ENCODE measurements at regions of chr18 and their contacts with region 1.

Region 1: DNA sequence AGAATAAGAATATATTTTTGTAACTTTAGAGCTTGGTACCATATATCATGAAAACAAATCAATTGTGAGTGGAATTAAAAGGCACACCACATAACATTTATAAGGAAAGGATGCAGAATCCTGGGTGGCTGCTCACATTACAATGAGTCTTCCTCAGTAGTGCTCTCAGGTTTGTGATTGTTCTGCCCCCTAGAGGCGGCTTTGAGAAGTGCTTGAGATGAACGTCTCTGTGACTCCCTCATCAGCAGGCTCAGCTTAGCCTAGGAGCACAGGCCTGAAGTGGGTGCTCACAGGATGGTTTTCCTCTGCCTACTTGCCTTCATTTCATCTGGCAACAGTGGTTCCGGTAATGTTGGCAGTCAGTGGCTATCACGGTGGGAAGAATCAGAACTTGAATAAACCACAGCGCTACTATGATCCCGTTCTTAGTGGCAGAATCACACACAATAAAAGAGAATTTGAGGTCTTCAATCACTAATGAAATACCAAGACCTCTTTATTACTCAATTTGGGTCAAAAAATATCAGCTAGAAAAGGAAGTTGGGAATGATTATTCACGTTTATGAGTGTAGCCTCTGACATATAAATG is 38.1 kb upstream of the B4GALT6 start:
- DNase-seq: peak; percentile 73 to 83
- ATAC-seq: peak; percentile 87 to 100 (median 98)
- H3K4me3 ChIP-seq: no peak overlapping the region
- H3K4me3 Mint-ChIP-seq: no peak overlapping the region
- H3K27ac ChIP-seq: no peak overlapping the region
- H3K27ac Mint-ChIP-seq: no peak overlapping the region
- H3K4me1 ChIP-seq: peaks cover 8% of the 10 kb centered on the region
- H3K4me1 Mint-ChIP-seq: peaks cover 4 to 7% of the 10 kb centered on the region in 2 donors
- H3K27me3 ChIP-seq: peaks cover 8% of the 10 kb centered on the region
- H3K27me3 Mint-ChIP-seq: peaks cover 17% of the 10 kb centered on the region in 2 donors
- CTCF ChIP-seq: peak; percentile 94

Region 2: DNA sequence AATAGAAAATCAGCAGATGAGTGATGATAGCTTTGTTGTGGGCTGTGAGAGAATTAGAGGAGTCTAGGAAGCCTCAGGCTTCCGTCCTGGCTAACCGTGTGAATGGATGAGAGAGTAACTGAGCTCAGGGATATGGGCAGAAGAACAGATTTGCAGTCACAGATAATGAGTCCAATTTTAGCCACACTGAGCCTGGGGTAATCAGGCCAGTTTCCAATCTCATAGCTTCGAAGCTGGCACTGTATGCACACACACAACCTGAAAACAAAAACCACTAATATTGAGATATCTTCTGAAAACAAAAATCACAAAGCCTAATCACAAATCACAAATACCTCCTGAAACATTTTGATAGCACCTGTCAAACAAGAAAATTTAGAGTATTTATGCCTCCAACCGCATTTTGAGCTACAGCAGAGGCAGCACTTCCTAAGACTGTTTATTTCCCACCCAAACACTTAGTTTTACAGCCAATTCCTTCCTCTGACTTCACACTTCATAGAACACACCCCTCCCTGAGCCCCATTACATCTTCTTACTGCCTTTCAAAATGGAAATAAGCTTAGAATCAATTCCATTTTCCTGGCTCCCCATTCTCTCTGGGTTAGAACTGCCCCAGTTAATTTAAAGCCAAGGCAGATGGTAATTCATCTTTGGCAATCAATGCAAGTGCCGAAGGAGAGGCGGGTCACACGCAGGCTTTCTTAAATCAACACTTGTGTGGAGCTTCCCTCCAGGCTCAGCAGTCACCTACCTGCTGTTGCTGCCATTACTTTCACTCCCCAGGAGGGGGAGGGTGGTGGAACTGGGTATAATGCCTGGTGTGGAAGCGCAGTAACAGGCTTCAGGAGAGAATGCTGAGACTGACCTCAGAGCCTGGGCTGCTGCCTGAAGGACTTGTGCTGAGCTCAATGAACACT is 111.9 kb before region 1 on chr18:
- intact Hi-C with region 1: loop called (anchors 2 kb)
- DNase-seq: peak in 1 of 2 donors; percentile 22
- ATAC-seq: peak; percentile 40 to 72 (median 57)
- H3K4me3 ChIP-seq: no peak overlapping the region
- H3K4me3 Mint-ChIP-seq: no peak overlapping the region
- H3K27ac ChIP-seq: no peak overlapping the region
- H3K27ac Mint-ChIP-seq: peak overlapping the region in 1 of 2 donors; percentile 3
- H3K4me1 ChIP-seq: no peaks in the 10 kb centered on the region
- H3K4me1 Mint-ChIP-seq: peaks cover 8 to 13% of the 10 kb centered on the region in 2 donors
- H3K27me3 ChIP-seq: no peaks in the 10 kb centered on the region
- H3K27me3 Mint-ChIP-seq: peaks cover 0 to 7% of the 10 kb centered on the region in 2 donors
- CTCF ChIP-seq: peak; percentile 18

Region 3: DNA sequence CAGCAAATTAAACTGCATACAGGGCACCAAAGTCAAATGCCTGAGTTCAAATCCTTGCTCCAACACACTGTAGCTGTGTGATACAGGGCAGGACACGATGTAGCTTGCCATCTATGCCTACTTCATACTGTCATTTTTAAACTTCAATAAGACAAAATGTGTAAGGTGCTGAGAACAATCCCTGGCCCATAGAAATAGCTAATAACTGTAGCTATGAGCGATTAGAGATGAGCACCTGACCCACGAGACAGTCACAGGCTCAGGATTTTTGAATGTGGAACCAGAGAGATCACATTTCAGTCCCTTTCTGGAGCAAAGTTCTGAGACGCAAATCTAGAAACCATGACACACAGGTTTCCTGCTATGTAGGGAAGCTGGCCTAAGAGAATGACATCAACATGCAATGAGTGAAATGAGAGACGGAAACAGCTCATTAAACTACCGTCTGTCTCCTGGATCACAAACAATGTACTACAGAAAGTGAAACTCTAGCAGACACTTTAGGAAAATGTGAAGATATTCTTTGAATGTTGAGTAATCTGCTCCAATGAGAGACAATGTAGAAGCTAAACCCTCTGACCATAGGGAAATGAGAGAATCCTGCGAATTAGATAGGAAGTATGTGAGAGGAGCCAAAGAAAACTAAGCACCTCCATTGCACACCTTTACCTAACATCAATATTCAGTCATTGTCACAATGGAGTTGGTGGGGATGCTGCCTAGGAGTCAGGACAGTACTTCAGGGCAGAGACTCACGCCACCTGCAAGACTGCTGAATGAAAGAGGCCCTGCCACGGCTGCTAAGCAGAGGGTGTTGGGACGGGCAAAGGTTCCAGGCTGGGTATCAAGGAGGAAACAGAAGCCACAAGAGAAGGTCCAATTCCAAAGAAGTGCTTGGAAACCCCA is 63.5 kb before region 1 on chr18:
- intact Hi-C with region 1: no loop called
- DNase-seq: peak in 1 of 2 donors; percentile 51
- ATAC-seq: peak; percentile 69 to 83 (median 82)
- H3K4me3 ChIP-seq: no peak overlapping the region
- H3K4me3 Mint-ChIP-seq: peak overlapping the region; percentile 49
- H3K27ac ChIP-seq: peak overlapping the region; percentile 53
- H3K27ac Mint-ChIP-seq: peak overlapping the region; percentile 80 to 89
- H3K4me1 ChIP-seq: peaks cover 14% of the 10 kb centered on the region
- H3K4me1 Mint-ChIP-seq: peaks cover 10 to 13% of the 10 kb centered on the region in 2 donors
- H3K27me3 ChIP-seq: no peaks in the 10 kb centered on the region
- H3K27me3 Mint-ChIP-seq: no peaks in the 10 kb centered on the region
- CTCF ChIP-seq: no peak

Region 4: DNA sequence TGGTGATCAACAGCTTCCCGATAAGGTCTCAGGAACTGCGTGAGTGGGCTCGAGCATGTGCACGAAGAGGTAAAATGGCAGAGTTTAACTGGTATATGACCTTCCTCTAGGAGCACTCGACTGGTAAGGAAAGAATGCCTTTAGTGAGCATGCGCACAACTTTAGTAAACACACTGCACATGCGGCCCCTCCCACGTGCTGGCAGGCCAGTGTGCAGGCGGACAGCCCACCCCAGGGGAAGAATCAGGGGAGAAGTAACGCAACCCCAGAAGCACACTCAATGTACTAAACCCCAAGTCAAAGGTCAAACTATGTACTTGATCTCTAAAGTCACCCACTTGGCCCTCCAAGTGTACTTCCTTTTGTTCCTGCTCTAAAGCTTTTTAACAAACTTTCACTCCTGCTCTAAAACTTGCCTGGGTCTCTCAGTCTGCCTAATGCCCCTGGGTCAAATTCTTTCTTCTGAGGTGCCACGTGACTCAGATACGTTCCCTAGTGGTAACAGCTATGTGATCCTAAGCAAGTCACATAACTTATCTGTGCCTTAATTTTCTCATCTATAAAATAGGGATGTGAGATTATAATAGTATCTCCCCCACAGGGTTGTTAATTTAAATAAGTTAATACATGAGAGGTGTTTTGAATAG is 67.1 kb after region 1 on chr18:
- intact Hi-C with region 1: no loop called
- DNase-seq: no peak
- ATAC-seq: no peak
- H3K4me3 ChIP-seq: no peak overlapping the region
- H3K4me3 Mint-ChIP-seq: no peak overlapping the region
- H3K27ac ChIP-seq: no peak overlapping the region
- H3K27ac Mint-ChIP-seq: no peak overlapping the region
- H3K4me1 ChIP-seq: peaks cover 11% of the 10 kb centered on the region
- H3K4me1 Mint-ChIP-seq: peaks cover 16 to 17% of the 10 kb centered on the region in 2 donors
- H3K27me3 ChIP-seq: no peaks in the 10 kb centered on the region
- H3K27me3 Mint-ChIP-seq: peaks cover 0 to 3% of the 10 kb centered on the region in 2 donors
- CTCF ChIP-seq: no peak

Region 5: DNA sequence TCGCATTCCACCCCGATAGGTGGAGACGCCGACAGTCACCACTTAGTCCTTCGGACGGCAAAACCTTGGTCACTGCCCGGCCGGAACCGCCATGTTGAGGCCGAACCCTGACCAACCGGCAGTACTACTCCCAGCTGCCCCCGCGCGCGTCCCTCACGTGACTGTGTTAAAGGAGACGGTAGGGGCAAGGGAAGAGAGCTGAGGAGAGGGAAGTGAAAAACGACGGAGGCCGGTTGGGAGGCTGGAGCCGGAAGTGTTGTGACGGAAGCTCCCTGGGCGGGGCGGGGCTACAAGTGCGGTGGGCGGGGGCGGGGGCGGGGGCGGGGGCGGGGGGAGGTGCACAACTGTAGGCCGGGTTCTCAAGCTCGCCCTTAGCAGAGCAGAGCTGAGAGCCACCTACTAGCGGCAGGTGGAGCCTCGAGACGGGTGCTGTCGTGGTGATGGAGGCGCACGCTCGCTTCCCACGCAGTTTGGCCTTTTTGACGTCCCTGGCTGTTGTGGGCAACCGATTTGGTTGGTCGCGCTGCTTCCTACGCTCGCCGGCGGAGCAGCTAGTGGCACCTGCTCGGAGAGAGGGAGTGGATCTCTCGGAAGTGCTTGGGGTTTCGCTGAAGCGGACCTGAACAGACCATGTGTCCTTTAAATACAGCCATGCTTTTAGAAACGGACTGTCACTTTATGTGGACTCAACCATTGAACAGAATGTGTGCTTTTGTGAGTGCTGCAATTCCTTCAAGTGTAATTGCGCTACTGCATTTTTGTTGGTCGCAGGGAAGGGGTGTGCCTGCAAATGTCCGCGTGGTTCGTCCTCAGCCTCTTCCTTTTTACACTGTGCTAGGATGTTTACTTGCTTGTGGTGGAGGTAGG is 220.8 kb after region 1 on chr18 and contains the start of gene TRAPPC8:
- intact Hi-C with region 1: no loop called
- DNase-seq: peak; percentile 85 to 96
- ATAC-seq: peak; percentile 82 to 93 (median 83)
- H3K4me3 ChIP-seq: peak within 1 kb of the TSS; percentile 96
- H3K4me3 Mint-ChIP-seq: peak within 1 kb of the TSS; percentile 99
- H3K27ac ChIP-seq: peak within 1 kb of the TSS; percentile 98
- H3K27ac Mint-ChIP-seq: peak within 1 kb of the TSS; percentile 95 to 99
- H3K4me1 ChIP-seq: peaks cover 13% of the 10 kb centered on the region
- H3K4me1 Mint-ChIP-seq: peaks cover 45 to 48% of the 10 kb centered on the region in 2 donors
- H3K27me3 ChIP-seq: no peaks in the 10 kb centered on the region
- H3K27me3 Mint-ChIP-seq: peaks cover 0 to 2% of the 10 kb centered on the region in 2 donors
- CTCF ChIP-seq: no peak
- total RNA-seq, gene TRAPPC8: 38.5 to 51.2 (median 41.4) TPM

Region 6: DNA sequence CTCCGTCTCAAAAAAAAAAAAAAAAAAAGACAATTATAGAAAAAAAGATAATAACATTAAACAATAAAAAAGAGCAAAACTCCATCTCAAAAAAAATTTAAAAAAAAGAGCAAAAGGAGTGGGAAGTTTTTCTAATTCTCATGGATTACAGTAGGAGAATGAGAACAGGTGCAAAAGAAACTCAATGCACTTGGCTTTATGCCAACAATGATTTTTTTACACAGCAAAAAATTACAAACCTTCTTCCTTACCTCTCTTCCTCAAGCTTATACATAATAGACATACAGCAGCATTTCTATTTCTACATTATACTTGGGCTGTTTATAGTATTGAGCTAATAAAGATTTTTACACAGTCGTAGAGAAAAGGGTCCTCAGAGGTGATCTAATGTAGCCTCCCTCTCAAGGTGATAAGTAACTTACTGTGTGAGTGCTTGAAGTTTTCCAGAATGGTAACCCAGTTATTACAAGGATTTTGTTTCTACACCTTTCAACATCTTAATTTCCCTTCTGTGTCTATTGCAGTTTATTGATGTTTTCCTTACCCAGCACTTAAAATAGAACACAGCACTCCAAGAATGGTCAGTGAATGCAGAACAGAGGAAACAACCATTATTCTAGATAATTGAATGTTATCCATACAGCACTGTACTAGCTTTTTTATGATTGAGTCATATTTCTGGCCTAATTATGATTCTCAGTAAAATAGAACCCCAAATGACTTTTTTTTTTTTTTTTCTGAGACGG is 334.3 kb after region 1 on chr18:
- intact Hi-C with region 1: no loop called
- DNase-seq: peak in 1 of 2 donors; percentile 32
- ATAC-seq: no peak
- H3K4me3 ChIP-seq: no peak overlapping the region
- H3K4me3 Mint-ChIP-seq: no peak overlapping the region
- H3K27ac ChIP-seq: no peak overlapping the region
- H3K27ac Mint-ChIP-seq: peak overlapping the region; percentile 52 to 70
- H3K4me1 ChIP-seq: peaks cover 8% of the 10 kb centered on the region
- H3K4me1 Mint-ChIP-seq: peaks cover 62 to 72% of the 10 kb centered on the region in 2 donors
- H3K27me3 ChIP-seq: no peaks in the 10 kb centered on the region
- H3K27me3 Mint-ChIP-seq: no peaks in the 10 kb centered on the region
- CTCF ChIP-seq: no peak

Measured in natural killer cell (primary cell).